Calu3 (cell line): ENCODE measurements at regions of chrX and their contacts with region 1.

Region 1: GRCh38 chrX:81201671-81202455 is at the starts of genes HMGN5 and SH3BGRL:
- DNase-seq: peak; percentile 78
- H3K4me3 Mint-ChIP-seq: peak within 1 kb of the TSS; percentile 87
- H3K27ac Mint-ChIP-seq: peak within 1 kb of the TSS; percentile 97
- H3K4me1 Mint-ChIP-seq: peaks cover 30% of the 10 kb centered on the region
- H3K27me3 Mint-ChIP-seq: no peaks in the 10 kb centered on the region
- CTCF ChIP-seq: no peak
- total RNA-seq, gene HMGN5: 13.0 and 14.4 TPM in 2 replicates
- total RNA-seq, gene SH3BGRL: 91.2 and 105 TPM in 2 replicates

Region 2: DNA sequence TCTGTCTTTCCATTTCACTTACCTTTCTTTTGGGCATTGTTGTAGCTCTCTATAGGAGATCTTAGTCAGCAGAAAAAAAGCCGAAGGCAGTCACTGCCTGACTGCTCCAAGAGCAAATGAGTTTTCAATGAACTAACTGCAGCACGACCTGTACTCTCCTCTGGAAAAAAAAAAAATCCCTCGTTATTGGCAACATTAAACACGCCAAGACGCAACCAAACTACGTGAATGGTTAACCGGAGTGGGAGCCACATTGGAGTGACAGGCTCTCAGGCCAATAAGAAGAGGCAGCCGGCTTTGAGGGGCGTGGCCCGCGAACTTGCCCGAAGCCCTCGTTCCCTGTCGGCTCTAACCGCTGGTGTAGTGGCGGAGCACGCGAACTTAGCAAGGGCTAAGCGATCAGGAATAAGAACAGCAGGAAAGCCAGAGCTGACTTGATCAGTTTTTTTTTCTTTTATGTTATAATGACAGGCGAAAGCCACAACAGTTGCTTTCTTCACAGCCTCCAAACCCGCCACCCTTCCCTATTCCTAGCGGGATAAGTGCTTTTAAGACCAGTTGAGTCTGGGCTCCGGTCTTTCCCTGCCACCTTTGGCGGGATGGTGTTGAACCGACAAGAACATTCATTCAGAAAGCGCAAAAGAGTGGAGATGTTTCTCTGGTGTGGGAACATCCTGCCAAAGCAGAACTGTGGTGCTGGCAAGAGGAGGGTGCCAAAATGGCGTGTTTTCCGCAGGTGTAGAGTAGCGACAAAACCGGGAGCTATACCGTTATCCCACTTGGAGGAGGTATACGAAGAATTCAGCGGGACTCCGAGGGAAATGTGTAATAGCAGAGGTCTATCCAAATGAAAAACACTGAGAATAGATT is 80.1 kb before region 1 on chrX:
- CTCF ChIA-PET with region 1: no interaction called
- intact Hi-C with region 1: loop called (anchors 5 kb)
- DNase-seq: peak; percentile 91
- H3K4me3 Mint-ChIP-seq: peak overlapping the region; percentile 90
- H3K27ac Mint-ChIP-seq: peak overlapping the region; percentile 82
- H3K4me1 Mint-ChIP-seq: peaks cover 9% of the 10 kb centered on the region
- H3K27me3 Mint-ChIP-seq: no peaks in the 10 kb centered on the region
- CTCF ChIP-seq: no peak

Region 3: DNA sequence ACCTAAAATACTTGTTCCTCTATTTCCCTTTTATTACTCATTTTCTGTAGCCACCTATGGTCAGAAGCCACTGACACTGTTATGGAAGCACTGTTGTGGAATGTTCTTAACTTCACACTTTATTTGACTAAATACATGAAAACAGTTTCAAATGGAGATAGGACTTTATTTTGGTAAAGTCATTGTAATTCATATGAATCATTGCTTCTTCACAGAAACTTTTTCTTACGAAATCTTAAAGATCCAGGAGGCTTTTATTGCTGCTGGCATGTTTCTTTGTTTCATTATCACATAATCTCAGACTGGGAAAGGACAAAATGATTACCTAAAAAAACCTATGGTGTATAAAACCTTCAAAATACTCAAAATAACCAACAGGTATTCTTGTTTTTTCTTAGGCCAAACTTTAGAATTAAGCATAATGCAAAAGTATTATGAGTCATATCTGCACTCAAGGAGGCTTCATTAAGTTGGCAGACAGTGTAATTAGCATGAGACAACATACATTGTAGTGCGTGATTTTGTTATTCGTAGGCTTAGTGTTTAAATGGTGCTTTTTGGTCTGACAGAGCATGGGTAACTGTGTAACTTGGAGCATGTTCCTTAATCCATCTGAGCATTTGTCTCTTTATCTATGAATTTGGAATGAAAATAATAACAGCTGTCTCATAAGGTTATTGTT is 58.0 kb after region 1 on chrX:
- CTCF ChIA-PET with region 1: no interaction called
- intact Hi-C with region 1: loop called (anchors 2 kb)
- DNase-seq: no peak
- H3K4me3 Mint-ChIP-seq: no peak overlapping the region
- H3K27ac Mint-ChIP-seq: peak overlapping the region; percentile 54
- H3K4me1 Mint-ChIP-seq: peaks cover 51% of the 10 kb centered on the region
- H3K27me3 Mint-ChIP-seq: no peaks in the 10 kb centered on the region
- CTCF ChIP-seq: no peak

Region 4: DNA sequence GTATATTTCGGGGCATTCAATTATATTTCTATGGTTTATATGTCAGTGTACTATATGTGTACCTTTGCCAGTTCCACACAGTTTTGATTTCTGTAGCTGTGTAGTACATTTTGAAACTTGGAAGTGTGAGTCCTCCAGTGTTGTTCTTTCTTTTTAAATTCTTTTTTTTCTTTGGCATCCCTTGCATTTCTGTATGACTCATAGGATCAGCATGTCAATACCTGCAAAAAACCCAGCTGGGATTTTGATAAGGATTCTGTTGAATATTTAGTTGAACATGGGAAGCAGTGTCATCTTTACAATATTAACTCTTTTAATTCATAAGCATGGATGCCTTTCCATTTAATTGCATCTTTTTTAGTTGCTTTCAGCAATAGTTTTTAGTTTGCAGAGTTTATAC is 100.0 kb after region 1 on chrX:
- CTCF ChIA-PET with region 1: no interaction called
- intact Hi-C with region 1: no loop called
- DNase-seq: no peak
- H3K4me3 Mint-ChIP-seq: no peak overlapping the region
- H3K27ac Mint-ChIP-seq: no peak overlapping the region
- H3K4me1 Mint-ChIP-seq: no peaks in the 10 kb centered on the region
- H3K27me3 Mint-ChIP-seq: no peaks in the 10 kb centered on the region
- CTCF ChIP-seq: no peak